GM12878 (cell line): ENCODE measurements at regions of chr17 and their contacts with region 1.

Region 1: DNA sequence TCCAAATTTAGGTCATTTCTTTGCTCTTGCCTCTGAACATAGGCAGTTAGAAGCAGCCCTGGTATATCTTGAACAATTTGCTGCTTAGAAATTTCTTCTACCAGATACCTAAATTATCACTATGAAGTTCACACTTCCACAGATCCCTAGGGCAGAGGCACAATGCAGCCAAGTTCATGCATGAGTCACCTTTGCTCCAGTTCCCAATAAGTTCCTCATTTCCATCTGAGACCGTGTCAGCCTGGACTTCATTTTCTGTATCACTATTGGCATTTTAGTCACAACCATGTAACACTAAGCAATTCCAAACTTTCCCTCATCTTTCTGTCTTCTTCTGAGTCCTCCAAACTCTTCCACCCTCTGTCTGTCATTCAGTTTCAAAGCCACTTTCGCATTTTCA is 45.0 kb downstream of the KCNJ16 start:
- DNase-seq: no peak
- ATAC-seq: no peak
- H3K4me3 ChIP-seq: no peak overlapping the region
- H3K27ac ChIP-seq: no peak overlapping the region
- H3K4me1 ChIP-seq: no peaks in the 10 kb centered on the region
- H3K27me3 ChIP-seq: no peaks in the 10 kb centered on the region
- CTCF ChIP-seq: no peak
- EP300 ChIP-seq: no peak
- POLR2A ChIP-seq: no peak
- RAD21 ChIP-seq: no peak

Region 2: GRCh38 chr17:70099884-70100283 is 20.1 kb before region 1 on chr17:
- CTCF ChIA-PET with region 1: no interaction called
- POLR2A ChIA-PET with region 1: no interaction called
- RAD21 ChIA-PET with region 1: no interaction called
- SMC1A ChIA-PET with region 1: no interaction called
- in situ Hi-C with region 1: no loop called
- intact Hi-C with region 1: loop called (anchors 1 kb)
- DNase-seq: no peak
- ATAC-seq: no peak
- H3K4me3 ChIP-seq: no peak overlapping the region
- H3K27ac ChIP-seq: no peak overlapping the region
- H3K4me1 ChIP-seq: no peaks in the 10 kb centered on the region
- H3K27me3 ChIP-seq: no peaks in the 10 kb centered on the region
- CTCF ChIP-seq: no peak
- EP300 ChIP-seq: no peak
- POLR2A ChIP-seq: no peak
- RAD21 ChIP-seq: no peak